ENCODE measurements at regions of chr9 and their contacts with region 1.

Region 1: GRCh38 chr9:76023715-76024195 is 133.3 kb downstream of the PCSK5 start:
- DNase-seq: peak in 8 of 9 experiments; percentile 1 to 82 (median 40)
- ATAC-seq: peak; percentile 84
- H3K4me3 ChIP-seq: peak overlapping the region; percentile 3 to 32
- H3K4me3 Mint-ChIP-seq: peak overlapping the region; percentile 80
- H3K27ac ChIP-seq: peak overlapping the region; percentile 26 to 54
- H3K27ac Mint-ChIP-seq: peak overlapping the region; percentile 95
- H3K4me1 ChIP-seq: peaks cover 93% of the 10 kb centered on the region
- H3K4me1 Mint-ChIP-seq: peaks cover 92% of the 10 kb centered on the region
- H3K27me3 ChIP-seq: no peaks in the 10 kb centered on the region
- H3K27me3 Mint-ChIP-seq: no peaks in the 10 kb centered on the region
- CTCF ChIP-seq: no peak

Region 2: DNA sequence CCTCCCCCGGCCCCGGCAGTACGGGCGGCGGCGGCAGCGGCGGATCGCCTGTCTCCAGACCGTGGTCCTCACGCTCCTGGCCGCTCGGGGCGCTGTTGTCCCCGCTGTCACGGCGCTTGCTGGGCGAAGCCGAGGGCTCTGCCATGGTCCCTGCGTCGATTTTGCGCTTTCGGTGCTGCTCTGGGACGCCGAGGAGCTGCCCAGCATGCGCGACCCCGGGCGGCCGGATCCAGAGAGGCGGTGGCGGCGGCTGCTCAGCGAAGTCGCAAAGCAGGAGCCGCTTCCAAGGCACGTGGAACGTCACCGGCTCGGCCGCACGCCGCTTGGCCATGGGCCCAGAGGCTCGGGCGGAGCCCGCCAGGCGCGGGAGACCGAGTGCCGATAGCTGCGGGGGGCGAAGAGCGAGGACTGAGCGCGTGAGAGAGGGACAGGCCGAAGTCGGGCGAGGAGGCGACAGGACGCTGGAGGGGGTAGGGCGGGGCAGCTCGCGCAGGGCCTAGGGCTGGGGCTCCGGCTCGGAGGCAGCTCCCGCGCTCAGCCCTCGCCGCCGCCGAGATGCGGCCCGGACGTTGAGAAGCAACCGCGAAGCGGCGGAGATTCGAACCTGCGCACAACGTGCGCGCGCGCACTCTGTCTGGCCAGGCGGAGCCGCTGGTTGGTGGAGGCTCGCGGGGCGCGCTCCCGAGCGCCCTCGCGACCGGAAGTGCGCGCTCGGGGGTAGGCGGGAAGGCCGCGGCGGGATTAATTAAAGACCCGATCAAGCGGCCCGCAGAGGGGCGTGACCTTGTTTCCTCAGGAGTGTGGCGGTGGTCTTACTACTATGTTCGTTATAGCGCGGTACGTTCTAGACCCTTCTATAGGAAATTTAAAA is 1071.2 kb before region 1 on chr9 and contains the start of gene C9orf40:
- CTCF ChIA-PET with region 1: no interaction called
- POLR2A ChIA-PET with region 1: no interaction called
- intact Hi-C with region 1: loop called in 1 of 2 experiments (anchors 10 kb)
- DNase-seq: peak; percentile 81 to 93 (median 92)
- ATAC-seq: peak; percentile 88
- H3K4me3 ChIP-seq: peak within 1 kb of the TSS; percentile 86 to 99
- H3K4me3 Mint-ChIP-seq: peak within 1 kb of the TSS; percentile 98
- H3K27ac ChIP-seq: peak within 1 kb of the TSS; percentile 87 to 95
- H3K27ac Mint-ChIP-seq: peak within 1 kb of the TSS; percentile 94
- H3K4me1 ChIP-seq: no peaks in the 10 kb centered on the region
- H3K4me1 Mint-ChIP-seq: peaks cover 20% of the 10 kb centered on the region
- H3K27me3 ChIP-seq: no peaks in the 10 kb centered on the region
- H3K27me3 Mint-ChIP-seq: no peaks in the 10 kb centered on the region
- CTCF ChIP-seq: peak; percentile 77
- total RNA-seq, gene C9orf40: 1.5 to 2.3 TPM

Region 3: GRCh38 chr9:75148561-75148960 is 875.2 kb before region 1 on chr9:
- CTCF ChIA-PET with region 1: no interaction called
- POLR2A ChIA-PET with region 1: no interaction called
- intact Hi-C with region 1: loop called in 1 of 2 experiments (anchors 10 kb)
- DNase-seq: peak in 2 of 9 experiments; percentile 16 to 34
- ATAC-seq: no peak
- H3K4me3 ChIP-seq: no peak overlapping the region
- H3K4me3 Mint-ChIP-seq: peak overlapping the region; percentile 55
- H3K27ac ChIP-seq: peak overlapping the region; percentile 12 to 70
- H3K27ac Mint-ChIP-seq: peak overlapping the region; percentile 88
- H3K4me1 ChIP-seq: peaks cover 78% of the 10 kb centered on the region
- H3K4me1 Mint-ChIP-seq: peaks cover 84% of the 10 kb centered on the region
- H3K27me3 ChIP-seq: no peaks in the 10 kb centered on the region
- H3K27me3 Mint-ChIP-seq: no peaks in the 10 kb centered on the region
- CTCF ChIP-seq: no peak

Region 4: GRCh38 chr9:75890472-75891276 is 133.1 kb before region 1 on chr9 and contains the start of gene PCSK5:
- CTCF ChIA-PET with region 1: interaction called, 3 read pairs
- POLR2A ChIA-PET with region 1: interaction called, 4 read pairs
- intact Hi-C with region 1: loop called (anchors 1 to 2 kb)
- DNase-seq: peak; percentile 66 to 92 (median 85)
- ATAC-seq: peak; percentile 90
- H3K4me3 ChIP-seq: peak within 1 kb of the TSS; percentile 81 to 82
- H3K4me3 Mint-ChIP-seq: peak within 1 kb of the TSS; percentile 92
- H3K27ac ChIP-seq: peak within 1 kb of the TSS; percentile 60 to 70
- H3K27ac Mint-ChIP-seq: peak within 1 kb of the TSS; percentile 85
- H3K4me1 ChIP-seq: peaks cover 16% of the 10 kb centered on the region
- H3K4me1 Mint-ChIP-seq: peaks cover 54% of the 10 kb centered on the region
- H3K27me3 ChIP-seq: peaks cover 0 to 6% of the 10 kb centered on the region in 2 experiments
- H3K27me3 Mint-ChIP-seq: no peaks in the 10 kb centered on the region
- CTCF ChIP-seq: no peak
- total RNA-seq, gene PCSK5: 13.7 to 13.8 TPM

Region 5: GRCh38 chr9:75953218-75953617 is 70.5 kb before region 1 on chr9:
- CTCF ChIA-PET with region 1: no interaction called
- POLR2A ChIA-PET with region 1: no interaction called
- intact Hi-C with region 1: loop called in 1 of 2 experiments (anchors 5 kb)
- DNase-seq: no peak
- ATAC-seq: no peak
- H3K4me3 ChIP-seq: no peak overlapping the region
- H3K4me3 Mint-ChIP-seq: no peak overlapping the region
- H3K27ac ChIP-seq: no peak overlapping the region
- H3K27ac Mint-ChIP-seq: no peak overlapping the region
- H3K4me1 ChIP-seq: no peaks in the 10 kb centered on the region
- H3K4me1 Mint-ChIP-seq: peaks cover 23% of the 10 kb centered on the region
- H3K27me3 ChIP-seq: no peaks in the 10 kb centered on the region
- H3K27me3 Mint-ChIP-seq: no peaks in the 10 kb centered on the region
- CTCF ChIP-seq: no peak

Region 6: GRCh38 chr9:76067696-76068095 is 43.9 kb after region 1 on chr9:
- CTCF ChIA-PET with region 1: no interaction called
- POLR2A ChIA-PET with region 1: no interaction called
- intact Hi-C with region 1: loop called in 1 of 2 experiments (anchors 5 kb)
- DNase-seq: no peak
- ATAC-seq: no peak
- H3K4me3 ChIP-seq: no peak overlapping the region
- H3K4me3 Mint-ChIP-seq: no peak overlapping the region
- H3K27ac ChIP-seq: no peak overlapping the region
- H3K27ac Mint-ChIP-seq: no peak overlapping the region
- H3K4me1 ChIP-seq: no peaks in the 10 kb centered on the region
- H3K4me1 Mint-ChIP-seq: peaks cover 2% of the 10 kb centered on the region
- H3K27me3 ChIP-seq: no peaks in the 10 kb centered on the region
- H3K27me3 Mint-ChIP-seq: no peaks in the 10 kb centered on the region
- CTCF ChIP-seq: no peak

Measured in CD8-positive, alpha-beta T cell (primary cell).